Sigmoid colon (tissue), 7 donors: ENCODE measurements at regions of chr22 and their contacts with region 1.

Region 1: GRCh38 chr22:30386960-30387827 is at the start of gene RNF215:
- DNase-seq: peak; percentile 88
- H3K4me3 ChIP-seq: peak within 1 kb of the TSS; percentile 46 to 67 (median 62)
- H3K27ac ChIP-seq: peak within 1 kb of the TSS; percentile 76 to 86 (median 81)
- H3K4me1 ChIP-seq: peaks cover 3 to 16% (median 14%) of the 10 kb centered on the region in 4 donors
- H3K27me3 ChIP-seq: no peaks in the 10 kb centered on the region
- CTCF ChIP-seq: peak; percentile 92 to 94 (median 94)
- EP300 ChIP-seq: no peak
- POLR2A ChIP-seq: no peak
- total RNA-seq, gene RNF215: 12.2 to 21.6 (median 13.0) TPM

Region 2: DNA sequence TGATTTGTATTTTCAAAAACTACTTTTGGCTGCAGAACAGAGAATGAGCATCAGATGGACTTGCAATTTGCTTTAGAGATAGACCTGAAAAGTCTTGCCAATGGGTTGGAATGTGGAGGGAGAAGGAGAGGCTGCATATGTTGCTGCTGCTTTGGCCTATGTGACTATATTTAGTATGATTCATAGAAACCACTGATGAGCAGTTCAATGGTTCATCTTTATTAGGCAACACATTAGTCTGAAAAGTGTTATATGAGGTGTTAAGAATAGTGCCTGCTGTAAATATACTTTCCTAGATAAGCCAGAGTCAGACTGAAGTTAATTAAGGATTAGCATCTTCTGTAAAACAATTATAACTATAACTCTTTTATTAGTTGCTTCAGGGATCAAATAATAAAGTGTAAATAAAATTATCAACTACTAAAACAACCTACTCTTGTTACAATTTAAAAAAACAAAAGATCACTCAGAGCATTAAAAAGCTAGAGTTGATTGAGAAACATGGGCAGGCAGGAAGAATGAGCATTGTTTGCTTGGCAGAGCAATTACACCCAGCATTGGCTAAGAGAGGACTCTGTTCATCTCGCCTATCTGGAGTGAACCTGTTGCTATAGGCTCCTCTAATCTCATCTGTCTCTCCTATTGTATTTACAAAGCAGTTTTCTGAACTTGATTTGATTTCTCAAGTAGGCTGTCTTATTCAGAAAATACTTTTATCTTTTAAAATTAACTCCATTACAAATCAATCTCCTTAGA is 270.7 kb before region 1 on chr22:
- intact Hi-C with region 1: loop called (anchors 2 kb)
- DNase-seq: no peak
- H3K4me3 ChIP-seq: no peak overlapping the region
- H3K27ac ChIP-seq: no peak overlapping the region
- H3K4me1 ChIP-seq: no peaks in the 10 kb centered on the region
- H3K27me3 ChIP-seq: no peaks in the 10 kb centered on the region
- CTCF ChIP-seq: no peak
- EP300 ChIP-seq: no peak
- POLR2A ChIP-seq: no peak

Region 3: GRCh38 chr22:30289134-30289979 is 97.8 kb before region 1 on chr22 and contains the start of gene CASTOR1:
- intact Hi-C with region 1: loop called (anchors 1 kb)
- DNase-seq: peak; percentile 100
- H3K4me3 ChIP-seq: peak within 1 kb of the TSS; percentile 90 to 95 (median 93)
- H3K27ac ChIP-seq: peak within 1 kb of the TSS; percentile 95 to 98 (median 96)
- H3K4me1 ChIP-seq: peaks cover 0 to 42% (median 35%) of the 10 kb centered on the region in 4 donors
- H3K27me3 ChIP-seq: no peaks in the 10 kb centered on the region
- CTCF ChIP-seq: no peak
- EP300 ChIP-seq: no peak
- POLR2A ChIP-seq: peak; percentile 81 to 85
- total RNA-seq, gene CASTOR1: 5.3 to 15.0 (median 10.8) TPM

Region 4: DNA sequence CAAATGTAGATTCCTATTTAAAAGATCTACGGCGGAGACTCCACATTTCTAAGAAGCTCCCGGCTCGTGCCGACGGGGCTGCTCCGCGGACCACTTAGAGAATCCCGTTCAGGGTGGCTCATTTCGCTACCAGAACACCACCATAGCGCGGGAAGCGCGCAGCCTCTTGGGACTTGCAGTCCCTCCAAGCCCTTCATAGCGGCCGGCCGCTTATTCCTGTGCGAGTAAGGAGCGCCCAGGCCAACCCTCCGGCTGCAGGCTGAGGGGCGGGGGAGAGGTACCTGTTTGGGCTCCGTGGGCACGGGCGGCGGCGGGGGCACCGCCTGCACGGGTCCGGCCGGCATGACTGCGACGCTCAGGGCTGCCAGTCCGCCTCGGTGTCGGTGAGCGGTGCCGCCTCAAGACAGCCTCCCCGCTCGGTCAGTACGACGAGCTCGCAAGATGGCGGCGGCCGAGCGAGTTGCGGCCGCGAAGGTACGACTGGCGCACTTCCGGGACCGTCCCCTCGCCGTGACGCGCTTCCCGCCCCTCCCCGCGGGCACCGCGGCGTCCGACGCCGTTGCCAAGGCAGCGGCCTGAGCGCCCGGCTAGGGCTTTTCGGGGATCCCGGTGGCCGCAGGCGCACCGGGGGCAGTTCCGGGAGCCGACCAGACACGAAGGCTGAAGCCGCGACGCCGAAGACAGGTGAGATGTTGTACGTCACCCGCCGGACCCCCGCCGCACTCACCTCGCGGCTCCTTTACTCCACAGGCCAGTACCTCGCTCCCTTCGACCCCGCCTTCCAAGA is 30.6 kb before region 1 on chr22 and contains the starts of genes CCDC157 and SF3A1:
- intact Hi-C with region 1: loop called (anchors 2 kb)
- DNase-seq: peak; percentile 94
- H3K4me3 ChIP-seq: peak within 1 kb of the TSS; percentile 69 to 91 (median 77)
- H3K27ac ChIP-seq: peak within 1 kb of the TSS; percentile 94 to 97 (median 96)
- H3K4me1 ChIP-seq: peaks cover 0 to 41% (median 37%) of the 10 kb centered on the region in 4 donors
- H3K27me3 ChIP-seq: no peaks in the 10 kb centered on the region
- CTCF ChIP-seq: no peak
- EP300 ChIP-seq: peak in 1 of 4 donors; percentile 34
- POLR2A ChIP-seq: peak; percentile 76 to 90
- total RNA-seq, gene CCDC157: 0.83 to 2.0 (median 1.7) TPM
- total RNA-seq, gene SF3A1: 24.2 to 61.5 (median 33.5) TPM

Region 5: GRCh38 chr22:30485362-30485988 is 98.3 kb after region 1 on chr22:
- intact Hi-C with region 1: loop called (anchors 1 kb)
- DNase-seq: peak; percentile 77
- H3K4me3 ChIP-seq: no peak overlapping the region
- H3K27ac ChIP-seq: no peak overlapping the region
- H3K4me1 ChIP-seq: peaks cover 0 to 5% (median 0%) of the 10 kb centered on the region in 4 donors
- H3K27me3 ChIP-seq: peaks cover 0 to 4% (median 0%) of the 10 kb centered on the region in 3 donors
- CTCF ChIP-seq: peak; percentile 78 to 93 (median 87)
- EP300 ChIP-seq: no peak
- POLR2A ChIP-seq: no peak

Region 6: DNA sequence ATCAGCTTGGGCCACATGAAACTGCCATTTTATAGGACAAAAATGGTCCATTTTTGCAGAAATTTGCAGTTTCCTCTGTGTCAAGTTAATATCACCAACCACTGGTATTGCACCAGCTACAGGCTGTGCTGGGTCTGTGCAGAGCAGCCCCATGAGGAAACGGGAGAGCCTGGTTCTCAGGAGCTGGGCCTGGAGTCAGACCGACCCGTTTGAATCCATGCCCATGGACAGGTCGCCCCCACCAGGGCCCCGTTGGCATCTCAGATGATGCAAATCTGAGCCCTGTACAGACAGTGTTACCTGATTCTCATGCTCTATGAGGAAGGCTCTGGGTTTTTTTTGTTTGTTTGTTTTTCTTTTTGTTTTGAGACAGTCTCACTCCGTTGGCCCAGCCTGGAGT is 169.2 kb after region 1 on chr22:
- intact Hi-C with region 1: no loop called
- DNase-seq: no peak
- H3K4me3 ChIP-seq: no peak overlapping the region
- H3K27ac ChIP-seq: no peak overlapping the region
- H3K4me1 ChIP-seq: no peaks in the 10 kb centered on the region
- H3K27me3 ChIP-seq: no peaks in the 10 kb centered on the region
- CTCF ChIP-seq: no peak
- EP300 ChIP-seq: no peak
- POLR2A ChIP-seq: no peak